ENCODE measurements at regions of chr18 and their contacts with region 1.

Region 1: DNA sequence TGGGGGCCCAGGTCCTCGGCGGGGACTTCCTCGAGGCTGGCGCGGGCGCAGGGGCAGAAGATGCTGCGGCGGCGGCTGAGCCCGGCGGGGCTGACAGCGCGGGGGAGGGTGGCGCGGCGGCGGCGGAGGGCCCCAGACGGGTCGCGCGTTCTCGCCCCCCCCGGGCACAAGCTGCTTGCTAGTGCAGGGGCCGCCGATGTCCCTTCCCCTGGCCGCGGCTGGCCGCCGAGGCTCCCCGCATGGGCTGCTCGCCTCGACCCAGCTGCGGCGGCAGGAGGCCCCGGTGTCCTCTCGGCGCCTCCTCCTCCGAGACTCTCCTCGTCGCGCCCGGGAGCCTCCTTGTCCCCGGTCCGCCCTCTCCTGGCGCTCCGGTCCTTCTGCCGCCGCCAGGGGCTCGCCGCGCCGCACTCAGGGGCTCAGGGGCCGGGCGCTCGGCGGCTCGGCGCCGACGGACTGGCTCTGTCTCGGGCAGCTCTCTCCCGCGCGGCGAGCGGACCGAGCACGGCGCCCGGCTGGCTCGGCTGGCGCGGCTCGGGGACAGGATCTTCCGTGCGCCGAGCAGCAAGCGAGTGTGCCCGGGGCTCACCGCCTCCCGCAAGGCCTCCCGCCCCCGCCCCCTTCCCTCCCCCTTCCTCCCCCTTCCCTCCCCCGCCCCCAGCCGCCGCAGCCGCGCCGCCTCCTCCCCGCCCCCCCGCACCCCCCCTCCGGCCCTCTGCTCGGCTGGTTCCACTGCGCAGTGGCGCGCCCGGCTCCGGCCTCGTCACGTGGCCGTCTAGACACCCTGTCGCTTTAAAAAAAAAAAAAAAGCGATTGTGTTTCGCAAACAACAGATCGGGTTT is 902 bp upstream of the SMAD7 start:
- DNase-seq: peak; percentile 82
- H3K4me3 Mint-ChIP-seq: peak overlapping the region; percentile 85
- H3K27ac Mint-ChIP-seq: peak overlapping the region; percentile 76
- H3K4me1 Mint-ChIP-seq: peaks cover 32% of the 10 kb centered on the region
- H3K27me3 Mint-ChIP-seq: no peaks in the 10 kb centered on the region

Region 2: GRCh38 chr18:48834413-48835031 is 117.1 kb before region 1 on chr18:
- CTCF ChIA-PET with region 1: no interaction called
- POLR2A ChIA-PET with region 1: interaction called, 9 read pairs
- intact Hi-C with region 1: loop called (anchors 1 kb)
- DNase-seq: peak; percentile 89
- H3K4me3 Mint-ChIP-seq: peak overlapping the region; percentile 77
- H3K27ac Mint-ChIP-seq: peak overlapping the region; percentile 92
- H3K4me1 Mint-ChIP-seq: peaks cover 83% of the 10 kb centered on the region
- H3K27me3 Mint-ChIP-seq: no peaks in the 10 kb centered on the region

Region 3: DNA sequence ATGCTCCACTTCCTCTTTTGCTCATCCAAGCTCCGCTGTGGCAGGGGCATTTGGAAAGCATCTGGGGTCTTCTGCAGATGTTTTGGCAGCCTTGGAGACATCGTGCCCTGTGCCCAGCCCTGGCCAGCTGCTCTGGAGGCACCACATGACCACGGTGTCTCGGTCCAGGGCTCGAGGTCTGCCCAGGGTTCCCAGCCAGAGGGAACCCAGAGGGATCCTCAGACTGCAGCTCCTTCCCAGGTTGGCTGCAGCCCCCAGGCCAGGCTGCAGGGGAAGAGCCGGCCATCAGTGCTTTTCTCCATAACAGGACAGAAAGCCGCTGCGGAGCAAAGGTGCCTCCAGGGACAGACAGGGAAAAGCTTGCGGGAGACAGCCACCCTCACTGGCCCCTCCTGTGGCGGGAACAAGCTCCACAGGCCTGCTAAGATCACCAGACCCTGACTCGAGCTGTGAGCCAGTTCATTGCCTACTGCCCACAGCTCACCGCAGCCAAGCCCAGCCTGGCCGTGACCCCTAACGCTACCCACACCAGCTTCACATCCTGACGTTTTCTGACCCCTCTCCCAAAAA is 75.6 kb before region 1 on chr18:
- CTCF ChIA-PET with region 1: no interaction called
- POLR2A ChIA-PET with region 1: no interaction called
- intact Hi-C with region 1: no loop called
- DNase-seq: no peak
- H3K4me3 Mint-ChIP-seq: no peak overlapping the region
- H3K27ac Mint-ChIP-seq: no peak overlapping the region
- H3K4me1 Mint-ChIP-seq: peaks cover 18% of the 10 kb centered on the region
- H3K27me3 Mint-ChIP-seq: no peaks in the 10 kb centered on the region

Region 4: GRCh38 chr18:48940854-48941611 is 10.6 kb before region 1 on chr18:
- CTCF ChIA-PET with region 1: interaction called, 7 read pairs
- POLR2A ChIA-PET with region 1: interaction called, 19 read pairs
- intact Hi-C with region 1: loop called (anchors 1 kb)
- DNase-seq: peak; percentile 82
- H3K4me3 Mint-ChIP-seq: peak overlapping the region; percentile 60
- H3K27ac Mint-ChIP-seq: peak overlapping the region; percentile 82
- H3K4me1 Mint-ChIP-seq: peaks cover 88% of the 10 kb centered on the region
- H3K27me3 Mint-ChIP-seq: no peaks in the 10 kb centered on the region

Region 5: GRCh38 chr18:49486953-49487710 is 535.5 kb after region 1 on chr18 and contains the start of gene C18orf32:
- CTCF ChIA-PET with region 1: no interaction called
- POLR2A ChIA-PET with region 1: no interaction called
- intact Hi-C with region 1: loop called (anchors 10 kb)
- DNase-seq: peak; percentile 96
- H3K4me3 Mint-ChIP-seq: peak within 1 kb of the TSS; percentile 97
- H3K27ac Mint-ChIP-seq: peak within 1 kb of the TSS; percentile 97
- H3K4me1 Mint-ChIP-seq: peaks cover 59% of the 10 kb centered on the region
- H3K27me3 Mint-ChIP-seq: no peaks in the 10 kb centered on the region
- total RNA-seq, gene C18orf32: 26.5 to 27.5 TPM

Region 6: GRCh38 chr18:49531678-49532153 is 580.0 kb after region 1 on chr18:
- CTCF ChIA-PET with region 1: no interaction called
- POLR2A ChIA-PET with region 1: no interaction called
- intact Hi-C with region 1: no loop called
- DNase-seq: no peak
- H3K4me3 Mint-ChIP-seq: no peak overlapping the region
- H3K27ac Mint-ChIP-seq: no peak overlapping the region
- H3K4me1 Mint-ChIP-seq: no peaks in the 10 kb centered on the region
- H3K27me3 Mint-ChIP-seq: peaks cover 10% of the 10 kb centered on the region

Measured in activated CD4-positive, alpha-beta memory T cell treated with anti-CD3 and anti-CD28 coated beads for 36 hours (primary cell).